GM10248 (cell line): ENCODE measurements at regions of chr2 and their contacts with region 1.

Region 1: DNA sequence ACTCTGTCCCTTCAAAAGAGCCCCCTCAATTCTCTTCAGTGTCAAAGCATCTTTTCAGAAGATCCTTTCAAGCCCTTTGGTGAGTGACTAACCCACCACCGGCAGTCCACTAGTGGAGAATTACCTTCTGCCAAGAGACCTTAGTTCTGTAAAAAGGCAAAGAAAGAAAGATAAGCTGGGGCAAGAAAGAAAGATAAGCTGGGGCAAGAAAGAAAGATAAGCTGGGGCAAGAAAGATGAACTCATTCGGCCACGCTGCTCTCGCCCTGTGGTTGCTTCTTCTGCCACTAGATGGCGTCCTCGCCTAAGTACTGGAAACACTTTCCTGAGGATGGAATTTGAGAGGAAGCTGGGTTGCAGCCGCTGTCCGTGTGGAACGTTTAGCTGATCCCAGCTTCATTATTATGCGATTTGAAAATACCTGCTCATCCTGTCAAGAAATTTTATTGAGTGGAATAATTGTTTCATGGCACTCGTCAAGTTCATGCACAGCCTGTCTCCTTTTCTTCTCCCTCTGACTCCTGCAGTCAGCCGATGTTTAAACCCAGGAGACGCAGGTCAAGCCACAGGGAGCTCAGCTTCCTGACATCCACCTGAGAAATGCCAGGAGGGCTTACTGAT is 17.3 kb upstream of the ANXA4 start:
- DNase-seq: peak; percentile 71
- CTCF ChIP-seq: peak; percentile 94

Region 2: GRCh38 chr2:69565431-69565839 is 159.2 kb before region 1 on chr2:
- CTCF ChIA-PET with region 1: interaction called, 23 read pairs
- POLR2A ChIA-PET with region 1: no interaction called
- DNase-seq: peak; percentile 76
- CTCF ChIP-seq: peak; percentile 90

Region 3: GRCh38 chr2:69755862-69756467 is 31.3 kb after region 1 on chr2:
- CTCF ChIA-PET with region 1: interaction called, 31 read pairs
- POLR2A ChIA-PET with region 1: no interaction called
- DNase-seq: peak; percentile 36
- CTCF ChIP-seq: no peak

Region 4: DNA sequence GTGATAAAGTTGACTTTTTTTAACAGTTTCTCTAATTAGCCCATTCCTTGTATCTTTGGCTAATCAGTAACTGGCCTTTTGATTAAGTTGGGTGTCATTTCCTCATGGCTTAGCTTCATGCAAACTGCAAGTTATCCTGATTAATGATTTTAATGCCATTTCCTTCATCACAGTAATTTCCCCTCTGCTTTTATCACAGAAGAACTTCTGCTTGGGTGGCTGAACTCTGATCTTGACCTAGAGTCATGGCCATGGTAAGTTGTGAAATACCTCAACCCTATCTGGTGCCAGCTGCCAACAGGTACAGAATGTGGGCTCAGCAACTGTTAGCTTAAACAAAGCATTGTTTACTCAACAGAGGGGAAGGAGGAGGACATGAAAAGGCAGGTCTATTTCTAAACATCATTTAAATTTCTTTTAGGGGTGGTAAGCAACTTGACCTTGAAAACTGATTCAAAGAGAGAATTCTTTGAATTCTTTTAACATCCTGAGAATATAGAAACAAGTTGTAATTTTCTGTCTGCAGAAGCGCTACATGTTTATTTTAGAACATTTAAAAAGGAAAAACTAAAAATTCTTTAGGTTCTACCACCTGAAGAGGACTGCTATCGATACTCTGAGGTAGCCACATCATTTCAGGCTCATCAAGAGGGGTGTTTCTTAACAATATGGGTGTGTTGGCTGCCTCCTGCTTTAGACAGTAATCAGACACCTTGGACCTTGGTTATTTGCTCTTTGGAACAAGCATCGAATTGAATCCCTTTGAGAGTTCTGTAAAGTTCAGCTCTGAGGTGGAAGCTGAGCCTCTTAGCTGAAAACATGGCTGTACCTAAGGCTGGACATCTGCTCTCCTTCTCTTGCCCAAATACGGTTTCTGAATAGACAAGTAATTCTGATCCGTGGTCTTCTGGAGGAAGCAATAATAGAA is 56.9 kb after region 1 on chr2:
- CTCF ChIA-PET with region 1: interaction called, 12 read pairs
- POLR2A ChIA-PET with region 1: no interaction called
- DNase-seq: no peak
- CTCF ChIP-seq: no peak

Region 5: GRCh38 chr2:69816923-69817542 is 92.4 kb after region 1 on chr2:
- CTCF ChIA-PET with region 1: interaction called, 351 read pairs
- POLR2A ChIA-PET with region 1: no interaction called
- DNase-seq: peak; percentile 59
- CTCF ChIP-seq: peak; percentile 74

Region 6: GRCh38 chr2:69848201-69848770 is 123.6 kb after region 1 on chr2:
- CTCF ChIA-PET with region 1: interaction called, 10 read pairs
- POLR2A ChIA-PET with region 1: no interaction called
- DNase-seq: no peak
- CTCF ChIP-seq: no peak

Region 7: GRCh38 chr2:69958446-69958845 is 233.8 kb after region 1 on chr2:
- CTCF ChIA-PET with region 1: no interaction called
- POLR2A ChIA-PET with region 1: no interaction called
- DNase-seq: no peak
- CTCF ChIP-seq: no peak

Region 8: DNA sequence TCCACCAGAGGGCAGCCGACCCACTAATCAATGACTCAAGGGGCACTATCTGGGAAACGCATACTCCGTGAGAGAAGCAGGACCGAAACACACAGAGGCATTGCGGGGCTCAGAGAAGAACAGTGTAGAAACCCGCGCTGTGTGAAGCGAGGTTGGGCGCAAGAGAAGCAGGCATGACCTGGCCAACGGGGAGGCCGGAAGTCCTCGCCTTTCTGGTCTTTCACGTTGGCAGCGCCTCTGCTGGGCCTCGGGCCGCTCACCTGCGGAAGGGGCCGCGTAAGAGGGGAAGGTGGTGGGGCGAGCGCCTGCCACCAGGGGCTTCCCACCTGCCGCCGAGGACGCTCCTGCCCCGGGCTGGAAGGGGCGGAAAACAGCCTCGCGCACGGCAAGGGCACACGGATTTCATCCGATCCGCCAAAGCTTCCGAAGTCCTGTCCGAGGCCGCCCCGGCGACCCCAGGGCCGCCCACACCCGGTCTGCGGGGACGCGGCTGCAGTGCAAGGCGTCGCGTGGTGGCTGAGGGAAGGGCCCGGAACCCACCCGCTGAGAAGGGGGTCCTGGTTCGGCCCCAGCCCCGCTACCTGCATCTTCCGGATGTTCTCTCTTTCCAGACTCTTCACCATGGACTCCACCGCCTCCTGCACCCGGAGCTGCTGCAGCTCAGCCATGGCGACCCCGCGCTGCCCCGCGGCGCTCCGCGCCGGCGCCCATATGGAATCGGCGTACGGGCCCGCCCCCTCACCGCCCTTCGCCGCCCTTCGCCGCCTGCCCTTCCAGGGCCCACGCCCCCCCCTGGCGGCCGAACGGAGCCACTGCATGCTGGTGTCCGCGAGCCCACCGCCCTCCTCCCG is 576.9 kb after region 1 on chr2 and contains the start of gene FAM136A:
- CTCF ChIA-PET with region 1: interaction called, 15 read pairs
- POLR2A ChIA-PET with region 1: no interaction called
- DNase-seq: peak; percentile 93
- CTCF ChIP-seq: peak; percentile 93